Common myeloid progenitor, CD34-positive (primary cell): ENCODE measurements at regions of chr5 and their contacts with region 1.

Region 1: DNA sequence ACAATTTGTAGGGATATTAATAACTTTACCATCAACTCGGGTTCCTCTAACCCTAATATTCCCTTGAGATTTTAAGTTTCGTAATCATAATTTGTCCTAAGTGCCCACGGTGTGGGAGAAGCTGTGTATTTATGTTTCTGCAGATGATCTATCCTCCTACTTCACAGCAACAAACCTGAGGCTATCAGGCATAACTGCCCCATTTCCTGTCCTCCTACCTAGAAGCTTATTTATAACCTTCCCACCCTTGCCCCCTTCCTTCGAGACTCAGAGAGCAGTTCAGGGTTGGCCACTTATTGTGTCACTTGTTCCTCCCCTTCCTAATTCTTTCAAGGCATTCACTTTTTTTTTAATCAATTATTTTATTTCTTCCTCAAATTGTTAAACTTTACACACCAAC is 29.6 kb upstream of the LCP2 start:
- DNase-seq: no peak
- H3K4me3 ChIP-seq: peak overlapping the region in 2 of 7 experiments; percentile 10 to 37
- H3K27ac ChIP-seq: no peak overlapping the region
- H3K4me1 ChIP-seq: peaks cover 19 to 49% (median 41%) of the 10 kb centered on the region in 4 experiments
- H3K27me3 ChIP-seq: no peaks in the 10 kb centered on the region

Region 2: DNA sequence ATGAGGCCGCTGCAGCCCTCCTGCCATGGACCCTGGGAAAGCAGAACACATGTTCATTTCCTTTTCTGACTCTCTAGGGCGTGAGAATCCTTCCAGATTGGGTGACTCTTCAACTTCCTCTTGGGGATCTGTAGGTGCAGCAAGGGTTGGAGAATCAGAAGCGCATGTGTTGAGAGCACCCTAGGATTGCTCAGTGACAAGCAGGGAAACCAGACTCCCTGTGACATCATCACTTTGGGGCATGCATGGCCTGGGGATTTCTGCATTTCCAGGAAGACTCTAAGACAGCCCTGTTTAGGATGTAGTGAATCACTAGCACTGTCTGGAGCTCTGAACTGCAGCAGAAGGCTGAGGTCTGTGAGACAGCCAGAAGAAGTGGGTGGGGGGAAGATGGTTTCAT is 14.5 kb before region 1 on chr5:
- CTCF ChIA-PET with region 1: interaction called, 16 read pairs
- POLR2A ChIA-PET with region 1: interaction called, 8 read pairs
- DNase-seq: peak in 2 of 3 donors; percentile 80 to 85
- H3K4me3 ChIP-seq: peak overlapping the region in 1 of 7 experiments; percentile 1
- H3K27ac ChIP-seq: no peak overlapping the region
- H3K4me1 ChIP-seq: peaks cover 13 to 43% (median 37%) of the 10 kb centered on the region in 4 experiments
- H3K27me3 ChIP-seq: no peaks in the 10 kb centered on the region